ENCODE measurements at regions of chr17 and their contacts with region 1.

Region 1: GRCh38 chr17:31696184-31696602 is 162.9 kb downstream of the COPRS start:
- DNase-seq: peak; percentile 58 to 96
- H3K4me3 ChIP-seq: no peak overlapping the region
- H3K27ac ChIP-seq: peak overlapping the region; percentile 71 to 73
- H3K4me1 ChIP-seq: peaks cover 6 to 45% of the 10 kb centered on the region in 2 donors
- H3K27me3 ChIP-seq: no peaks in the 10 kb centered on the region
- CTCF ChIP-seq: peak in 1 of 3 experiments; percentile 18

Region 2: GRCh38 chr17:31508288-31509094 is 187.7 kb before region 1 on chr17:
- intact Hi-C with region 1: no loop called
- DNase-seq: no peak
- H3K4me3 ChIP-seq: no peak overlapping the region
- H3K27ac ChIP-seq: no peak overlapping the region
- H3K4me1 ChIP-seq: peaks cover 5 to 18% of the 10 kb centered on the region in 2 donors
- H3K27me3 ChIP-seq: no peaks in the 10 kb centered on the region
- CTCF ChIP-seq: peak in 1 of 3 experiments; percentile 7

Region 3: DNA sequence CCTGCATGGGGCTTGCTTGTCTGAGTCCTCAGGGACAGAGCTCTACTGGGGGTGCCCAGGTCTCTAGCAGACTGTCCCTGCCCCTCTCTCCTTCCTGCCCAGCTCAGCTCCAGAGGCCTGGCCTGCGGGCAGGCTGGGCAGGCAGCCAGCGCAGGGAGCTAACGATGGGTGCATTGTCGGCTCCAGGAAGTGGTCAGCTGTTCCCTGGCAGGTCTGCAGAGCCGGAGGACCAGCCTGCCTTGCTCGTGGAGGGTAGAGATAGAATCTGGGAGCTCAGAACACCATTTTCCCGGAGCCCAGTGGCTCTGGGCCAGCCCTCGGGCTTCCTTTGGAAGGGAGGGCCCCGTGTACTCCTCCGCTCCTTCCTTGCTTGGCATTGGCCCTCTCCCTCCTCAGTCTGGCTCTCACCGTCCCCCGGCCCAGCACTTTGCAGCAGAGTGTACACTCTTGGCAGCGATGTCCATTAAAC is 115.1 kb before region 1 on chr17:
- intact Hi-C with region 1: loop called (anchors 5 kb)
- DNase-seq: peak in 1 of 2 donors; percentile 90
- H3K4me3 ChIP-seq: peak overlapping the region in 1 of 2 donors; percentile 52
- H3K27ac ChIP-seq: peak overlapping the region; percentile 89
- H3K4me1 ChIP-seq: peaks cover 22 to 48% of the 10 kb centered on the region in 2 donors
- H3K27me3 ChIP-seq: no peaks in the 10 kb centered on the region
- CTCF ChIP-seq: no peak

Region 4: DNA sequence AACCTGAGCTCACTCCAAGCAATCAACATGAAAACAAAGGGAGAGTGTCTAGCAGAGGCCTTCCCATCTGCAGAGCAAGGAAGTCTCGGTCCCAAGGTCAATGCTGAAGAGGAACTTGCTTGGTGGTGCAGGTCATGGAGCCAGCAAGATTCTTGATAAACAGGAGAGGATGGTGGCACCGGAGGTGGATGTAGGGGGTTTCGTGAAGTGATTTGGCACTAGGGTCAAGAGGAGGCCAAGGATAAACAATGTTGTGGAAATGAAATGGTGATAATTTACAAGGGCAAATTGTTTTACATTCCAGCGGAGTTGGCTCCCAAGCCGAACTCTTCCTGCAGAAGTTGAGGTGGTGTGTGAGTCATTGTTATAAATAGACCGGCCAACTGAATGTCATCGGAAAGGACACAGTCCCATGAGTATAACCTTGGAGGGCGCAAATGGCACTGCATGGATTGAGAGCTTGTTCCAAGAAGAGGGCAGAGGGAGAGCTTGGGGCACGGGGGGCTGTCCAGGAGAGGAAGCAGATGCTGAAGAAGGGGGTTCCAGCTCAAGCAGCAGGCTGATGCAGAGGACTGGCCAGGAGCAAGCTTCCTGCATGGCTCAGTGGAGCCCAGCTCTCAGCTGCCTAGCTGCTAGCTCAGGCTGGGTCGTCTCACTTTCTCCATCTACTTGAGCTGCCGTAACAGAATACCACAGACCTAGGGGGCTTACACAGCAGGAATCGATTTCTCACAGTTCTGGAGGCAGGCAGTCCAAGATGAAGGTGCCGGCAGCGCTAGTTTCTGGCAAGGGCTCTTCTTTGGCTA is 26.3 kb after region 1 on chr17:
- intact Hi-C with region 1: loop called (anchors 1 kb)
- DNase-seq: peak in 1 of 2 donors; percentile 79
- H3K4me3 ChIP-seq: no peak overlapping the region
- H3K27ac ChIP-seq: peak overlapping the region; percentile 67 to 81
- H3K4me1 ChIP-seq: peaks cover 5 to 22% of the 10 kb centered on the region in 2 donors
- H3K27me3 ChIP-seq: no peaks in the 10 kb centered on the region
- CTCF ChIP-seq: no peak

Region 5: DNA sequence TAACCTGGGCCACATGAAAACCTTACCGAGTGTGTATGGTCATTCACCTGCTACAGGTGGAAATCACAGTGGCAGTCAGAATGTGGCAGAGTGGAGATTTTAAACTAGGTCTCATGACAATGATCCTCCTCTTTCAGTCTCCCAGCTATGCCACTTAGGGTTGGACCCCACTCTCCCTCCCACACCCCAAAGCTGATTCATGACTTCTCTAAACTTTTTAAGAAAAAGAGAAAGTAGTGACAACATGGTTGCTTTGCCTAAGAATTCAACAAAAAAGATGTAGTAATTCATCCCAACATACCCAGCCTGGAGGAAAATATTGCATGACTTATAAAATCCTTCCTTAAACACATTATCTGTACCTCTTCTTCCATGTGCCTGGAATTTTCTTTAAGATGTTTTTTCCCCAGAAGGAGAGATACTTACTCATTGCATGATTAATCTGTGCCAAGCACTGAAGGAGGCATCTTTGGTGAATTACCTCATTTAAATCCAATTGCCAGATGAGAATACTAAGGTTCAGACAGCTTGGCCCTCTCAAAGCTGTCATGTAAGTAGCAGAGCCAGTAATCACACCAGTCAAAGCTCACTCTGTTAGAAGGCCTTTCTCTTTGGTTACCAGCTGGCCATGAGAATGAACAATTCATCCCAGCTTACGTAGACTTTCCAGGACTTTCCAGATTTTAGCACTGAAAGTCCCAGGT is 43.0 kb after region 1 on chr17:
- intact Hi-C with region 1: loop called (anchors 2 kb)
- DNase-seq: no peak
- H3K4me3 ChIP-seq: no peak overlapping the region
- H3K27ac ChIP-seq: peak overlapping the region; percentile 68 to 80
- H3K4me1 ChIP-seq: peaks cover 5 to 48% of the 10 kb centered on the region in 2 donors
- H3K27me3 ChIP-seq: no peaks in the 10 kb centered on the region
- CTCF ChIP-seq: no peak

Region 6: DNA sequence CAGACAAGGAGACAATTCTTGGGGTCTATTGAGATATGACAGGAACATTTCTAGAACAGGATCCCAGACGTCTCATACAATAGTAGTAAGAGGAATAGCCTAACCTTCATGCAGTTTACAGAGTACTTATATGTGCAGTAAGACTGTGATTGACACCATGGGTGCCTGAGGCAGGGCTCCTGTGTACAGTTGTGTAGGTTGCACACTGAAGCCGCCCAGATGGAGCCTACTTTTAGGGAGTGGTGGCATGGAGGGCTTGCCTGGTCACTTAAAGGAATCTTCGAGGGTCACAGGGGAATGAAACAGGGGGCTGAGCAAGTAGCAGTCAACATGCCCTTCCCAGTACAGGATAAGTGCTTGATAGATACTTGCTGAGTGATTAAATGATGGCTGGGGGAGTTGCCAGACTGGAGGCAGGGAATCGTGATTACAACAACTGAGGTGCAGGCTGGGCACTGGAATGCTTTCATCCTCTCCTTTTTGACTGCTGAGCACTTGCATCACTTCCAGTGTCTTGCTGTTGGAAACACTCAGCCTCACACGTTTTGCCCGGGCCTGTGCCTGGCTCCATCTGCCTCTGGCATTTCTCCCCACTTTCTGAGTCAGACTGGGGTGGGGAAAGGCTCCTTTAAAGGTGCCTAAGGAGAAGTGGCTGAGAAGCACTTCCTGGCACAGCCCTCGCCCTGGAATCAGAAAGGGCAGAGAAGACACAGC is 91.8 kb after region 1 on chr17:
- intact Hi-C with region 1: loop called (anchors 2 kb)
- DNase-seq: peak; percentile 51 to 89
- H3K4me3 ChIP-seq: no peak overlapping the region
- H3K27ac ChIP-seq: peak overlapping the region; percentile 55 to 85
- H3K4me1 ChIP-seq: peaks cover 0 to 7% of the 10 kb centered on the region in 2 donors
- H3K27me3 ChIP-seq: no peaks in the 10 kb centered on the region
- CTCF ChIP-seq: no peak

Region 7: GRCh38 chr17:31842183-31843069 is 146.2 kb after region 1 on chr17:
- intact Hi-C with region 1: loop called (anchors 2 kb)
- DNase-seq: peak in 1 of 2 donors; percentile 85
- H3K4me3 ChIP-seq: peak overlapping the region in 1 of 2 donors; percentile 49
- H3K27ac ChIP-seq: peak overlapping the region; percentile 67 to 74
- H3K4me1 ChIP-seq: peaks cover 10 to 24% of the 10 kb centered on the region in 2 donors
- H3K27me3 ChIP-seq: no peaks in the 10 kb centered on the region
- CTCF ChIP-seq: peak; percentile 96 to 99 (median 96)

Region 8: DNA sequence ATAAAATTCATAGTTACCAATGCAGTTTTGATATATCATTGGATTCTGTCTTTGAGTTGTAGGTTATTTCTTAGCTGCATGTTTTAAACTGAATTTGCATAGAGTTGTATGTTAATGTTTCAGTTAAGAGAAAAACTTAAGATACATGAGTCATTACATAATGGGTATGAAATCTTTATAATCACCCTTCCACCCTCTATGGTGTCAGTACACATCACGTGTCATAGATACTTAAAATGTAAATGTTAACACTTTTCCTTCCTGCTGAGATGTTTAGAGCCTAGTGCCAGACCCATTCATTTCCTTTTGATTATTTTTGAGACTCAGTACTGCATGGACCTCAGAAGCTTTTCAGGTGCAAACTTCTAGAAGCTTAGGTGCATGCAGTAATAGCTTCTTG is 674.2 kb after region 1 on chr17:
- intact Hi-C with region 1: no loop called
- DNase-seq: no peak
- H3K4me3 ChIP-seq: no peak overlapping the region
- H3K27ac ChIP-seq: no peak overlapping the region
- H3K4me1 ChIP-seq: no peaks in the 10 kb centered on the region
- H3K27me3 ChIP-seq: no peaks in the 10 kb centered on the region
- CTCF ChIP-seq: no peak

Measured in ascending aorta (tissue), 2 donors.